Spleen (tissue), 13 donors: ENCODE measurements at regions of chr22 and their contacts with region 1.

Region 1: DNA sequence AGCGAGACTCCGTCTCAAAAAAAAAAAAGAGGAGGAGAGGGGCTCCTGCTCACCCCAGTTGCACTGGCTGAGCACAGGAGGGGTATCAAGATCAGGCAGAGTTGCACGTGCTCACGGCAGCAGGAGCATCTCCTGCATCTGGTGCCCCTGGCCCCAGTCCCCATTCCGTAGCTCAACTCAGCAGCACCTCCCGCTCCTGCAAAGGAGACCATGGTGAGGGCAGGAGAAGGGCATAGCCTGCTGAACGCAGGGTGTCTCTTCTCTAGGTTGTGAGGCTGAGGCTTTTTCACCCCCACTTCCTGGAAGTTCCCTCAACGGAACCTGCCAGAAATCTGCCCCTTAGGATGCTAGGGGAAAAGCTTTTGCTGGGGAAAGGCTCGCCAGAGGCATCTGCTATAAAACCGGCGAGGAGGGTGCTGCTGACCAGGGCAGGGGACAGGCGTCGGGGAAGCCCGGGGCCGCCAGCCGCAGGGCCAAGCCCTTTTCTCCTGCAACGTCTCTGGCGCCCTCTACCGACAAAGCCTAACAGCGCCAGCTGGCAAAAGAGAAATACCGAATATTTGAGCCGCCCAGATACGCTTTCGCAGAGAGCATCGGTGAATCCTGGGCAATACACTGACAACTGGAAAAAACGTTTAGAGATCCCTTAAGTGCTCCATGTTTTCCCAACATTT is 1.0 kb upstream of the PPP6R2 start:
- DNase-seq: peak; percentile 95
- H3K4me3 ChIP-seq: peak overlapping the region; percentile 64 to 95 (median 71)
- H3K27ac ChIP-seq: peak overlapping the region; percentile 37 to 93 (median 87)
- H3K4me1 ChIP-seq: peaks cover 1 to 28% (median 20%) of the 10 kb centered on the region in 6 donors
- H3K27me3 ChIP-seq: no peaks in the 10 kb centered on the region
- CTCF ChIP-seq: peak; percentile 88 to 97 (median 95)
- POLR2A ChIP-seq: no peak

Region 2: DNA sequence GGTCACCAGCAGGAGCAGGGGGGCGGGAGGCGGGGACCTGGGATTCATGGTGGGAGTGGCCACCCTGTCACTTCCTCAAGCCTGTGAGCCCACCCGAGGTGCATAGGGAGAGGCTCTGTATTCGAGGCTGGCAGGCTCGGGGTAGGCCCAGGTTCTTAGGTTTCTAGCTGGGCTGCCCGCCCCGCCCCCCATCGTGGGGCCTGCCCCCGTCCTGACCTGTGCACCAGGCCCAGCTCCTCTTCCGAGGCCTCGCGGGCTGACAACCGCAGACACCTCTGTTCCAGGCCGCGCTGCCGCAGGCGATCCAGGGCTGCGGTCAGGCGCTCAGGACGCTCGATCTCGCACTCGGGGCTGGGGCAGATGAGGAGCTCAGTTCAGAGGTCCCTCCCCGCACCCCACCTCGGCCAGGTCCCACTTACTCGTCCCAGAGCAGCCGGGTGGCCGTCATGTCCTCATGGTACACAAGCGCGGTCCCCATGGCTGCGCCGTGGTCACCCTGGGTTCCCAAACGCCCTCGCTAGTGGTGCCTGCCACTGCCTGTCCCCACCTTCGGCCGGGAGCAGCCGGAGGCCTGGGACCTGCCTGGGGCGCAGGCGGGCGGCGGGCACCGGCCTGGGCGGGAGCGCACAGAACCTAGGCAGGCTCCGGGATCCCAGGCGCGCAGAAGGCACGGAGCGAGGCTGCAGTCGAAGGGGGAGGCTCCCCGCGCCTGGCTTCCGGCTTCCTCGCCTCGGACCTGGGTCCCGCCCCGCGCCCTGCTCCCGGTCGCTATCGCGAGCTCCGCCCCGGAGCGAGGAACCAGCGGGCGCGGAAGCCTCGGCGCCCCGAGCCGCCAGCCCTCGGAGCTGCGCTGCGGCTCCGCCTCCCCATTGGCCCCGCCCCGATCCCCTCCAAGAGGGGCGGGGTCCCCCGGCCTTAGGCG is 91.3 kb before region 1 on chr22 and contains the start of gene HDAC10:
- intact Hi-C with region 1: loop called (anchors 5 kb)
- DNase-seq: peak; percentile 96
- H3K4me3 ChIP-seq: peak within 1 kb of the TSS; percentile 67 to 85 (median 80)
- H3K27ac ChIP-seq: peak within 1 kb of the TSS; percentile 72 to 86 (median 75)
- H3K4me1 ChIP-seq: peaks cover 25 to 66% (median 58%) of the 10 kb centered on the region in 6 donors
- H3K27me3 ChIP-seq: no peaks in the 10 kb centered on the region
- CTCF ChIP-seq: peak in 1 of 11 experiments; percentile 26
- POLR2A ChIP-seq: peak in 2 of 3 donors; percentile 22 to 25
- total RNA-seq, gene HDAC10: 63.6 to 108 (median 70.2) TPM

Region 3: GRCh38 chr22:50399751-50400331 is 57.7 kb after region 1 on chr22:
- intact Hi-C with region 1: no loop called
- DNase-seq: peak; percentile 84
- H3K4me3 ChIP-seq: peak overlapping the region in 1 of 8 donors; percentile 8
- H3K27ac ChIP-seq: peak overlapping the region; percentile 32 to 85 (median 76)
- H3K4me1 ChIP-seq: peaks cover 20 to 81% (median 42%) of the 10 kb centered on the region in 6 donors
- H3K27me3 ChIP-seq: no peaks in the 10 kb centered on the region
- CTCF ChIP-seq: peak in 6 of 11 experiments; percentile 41 to 62 (median 53)
- POLR2A ChIP-seq: no peak

Region 4: DNA sequence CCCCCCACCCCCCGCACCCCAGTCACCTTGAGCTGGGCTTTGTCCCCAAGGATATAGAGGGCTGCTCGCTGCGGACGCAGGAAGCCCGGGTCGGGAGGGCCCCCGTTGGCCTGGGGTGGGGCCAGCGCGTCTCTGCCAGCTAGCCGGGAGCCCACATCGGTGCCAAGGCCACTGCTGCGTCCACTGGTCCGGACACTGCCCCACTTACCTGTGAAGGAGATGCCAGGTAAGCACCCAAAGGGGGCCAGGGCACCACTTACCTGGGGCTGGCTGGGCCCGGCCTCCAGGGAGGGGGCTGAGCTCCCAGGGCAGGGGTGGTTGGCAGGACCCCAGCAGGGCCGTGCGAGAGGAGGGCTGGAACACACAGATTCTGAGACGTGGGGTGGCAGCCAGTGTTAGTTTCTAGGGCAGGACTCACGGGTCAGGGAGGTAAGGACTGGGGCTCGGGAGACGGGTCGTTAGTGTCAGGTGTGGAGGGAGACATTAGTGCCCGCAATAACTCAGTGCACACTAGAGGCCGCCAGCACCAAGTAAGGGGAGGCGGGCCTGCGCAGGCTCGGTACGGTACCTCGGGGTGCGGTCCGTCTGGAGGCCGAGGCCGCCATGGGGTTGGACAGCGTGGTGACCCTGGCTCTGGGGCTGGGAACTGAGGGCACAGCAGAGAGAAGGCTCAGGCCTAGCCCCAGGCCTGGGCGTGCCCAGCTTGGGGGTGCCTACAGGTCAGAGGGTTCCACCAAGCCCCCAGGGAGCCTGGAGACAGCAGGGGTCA is 114.5 kb after region 1 on chr22:
- intact Hi-C with region 1: no loop called
- DNase-seq: no peak
- H3K4me3 ChIP-seq: no peak overlapping the region
- H3K27ac ChIP-seq: no peak overlapping the region
- H3K4me1 ChIP-seq: no peaks in the 10 kb centered on the region
- H3K27me3 ChIP-seq: no peaks in the 10 kb centered on the region
- CTCF ChIP-seq: no peak
- POLR2A ChIP-seq: no peak

Region 5: GRCh38 chr22:50474668-50475492 is 132.8 kb after region 1 on chr22 and contains the start of gene SBF1:
- intact Hi-C with region 1: loop called (anchors 10 kb)
- DNase-seq: peak; percentile 97
- H3K4me3 ChIP-seq: peak within 1 kb of the TSS; percentile 57 to 97 (median 80)
- H3K27ac ChIP-seq: peak within 1 kb of the TSS; percentile 74 to 91 (median 84)
- H3K4me1 ChIP-seq: peaks cover 43 to 53% (median 49%) of the 10 kb centered on the region in 6 donors
- H3K27me3 ChIP-seq: peaks cover 0 to 10% (median 0%) of the 10 kb centered on the region in 7 donors
- CTCF ChIP-seq: no peak
- POLR2A ChIP-seq: peak in 1 of 3 donors; percentile 54
- total RNA-seq, gene SBF1: 65.2 to 96.9 (median 78.9) TPM